Dendritic cell treated with granulocyte-macrophage colony-stimulating factor and Interleukin-4, amounts not matched to agents 40 ng/mL and 50 ng/mL, for 4 days (primary cell): ENCODE measurements at regions of chr1 and their contacts with region 1.

Region 1: GRCh38 chr1:224454397-224455066 is 19.9 kb upstream of the WDR26 start:
- H3K4me3 Mint-ChIP-seq: no peak overlapping the region
- H3K27ac Mint-ChIP-seq: no peak overlapping the region
- H3K4me1 Mint-ChIP-seq: peaks cover 40% of the 10 kb centered on the region
- H3K27me3 Mint-ChIP-seq: no peaks in the 10 kb centered on the region

Region 2: GRCh38 chr1:224420106-224420505 is 34.4 kb before region 1 on chr1:
- intact Hi-C with region 1: loop called (anchors 5 kb)
- H3K4me3 Mint-ChIP-seq: no peak overlapping the region
- H3K27ac Mint-ChIP-seq: no peak overlapping the region
- H3K4me1 Mint-ChIP-seq: peaks cover 5% of the 10 kb centered on the region
- H3K27me3 Mint-ChIP-seq: no peaks in the 10 kb centered on the region

Region 3: DNA sequence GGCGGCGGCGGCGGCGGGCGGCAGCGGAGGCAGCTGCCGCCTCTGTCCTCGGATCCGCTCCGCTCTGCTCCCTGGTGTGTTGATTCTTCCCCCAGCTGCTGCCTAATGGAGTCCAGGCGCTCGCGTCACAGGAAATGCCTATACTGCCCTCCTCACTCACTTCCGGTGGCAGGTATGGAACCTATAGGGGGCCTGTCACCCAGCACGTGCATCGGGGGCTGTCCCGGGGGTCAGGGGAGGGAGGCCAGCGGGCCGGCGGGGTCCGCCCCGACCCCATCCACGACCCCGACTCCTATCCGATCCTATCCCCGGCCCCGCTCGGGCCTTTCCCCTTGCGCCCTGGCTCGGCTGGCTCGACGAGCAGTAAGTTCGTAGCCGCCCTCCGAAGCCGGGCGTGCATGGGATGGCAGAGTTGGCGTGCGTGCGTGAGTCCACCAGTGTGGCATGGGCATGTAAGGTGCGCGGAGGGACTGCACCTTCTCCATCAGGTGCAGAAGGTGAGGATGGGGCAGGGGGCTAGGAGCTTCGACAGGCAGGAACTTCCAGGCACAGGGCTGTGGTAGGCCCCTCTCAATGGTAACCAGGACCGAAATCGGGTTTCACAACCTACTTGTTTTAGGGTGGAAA is 19.7 kb before region 1 on chr1 and contains the start of gene WDR26:
- intact Hi-C with region 1: loop called (anchors 1 kb)
- H3K4me3 Mint-ChIP-seq: peak within 1 kb of the TSS; percentile 94
- H3K27ac Mint-ChIP-seq: peak within 1 kb of the TSS; percentile 96
- H3K4me1 Mint-ChIP-seq: peaks cover 33% of the 10 kb centered on the region
- H3K27me3 Mint-ChIP-seq: no peaks in the 10 kb centered on the region

Region 4: GRCh38 chr1:224503161-224504118 is 48.9 kb after region 1 on chr1:
- intact Hi-C with region 1: loop called (anchors 5 kb)
- H3K4me3 Mint-ChIP-seq: peak overlapping the region; percentile 69
- H3K27ac Mint-ChIP-seq: peak overlapping the region; percentile 95
- H3K4me1 Mint-ChIP-seq: peaks cover 78% of the 10 kb centered on the region
- H3K27me3 Mint-ChIP-seq: no peaks in the 10 kb centered on the region